Transverse colon (tissue), 4 donors: ENCODE measurements at regions of chr14 and their contacts with region 1.

Region 1: DNA sequence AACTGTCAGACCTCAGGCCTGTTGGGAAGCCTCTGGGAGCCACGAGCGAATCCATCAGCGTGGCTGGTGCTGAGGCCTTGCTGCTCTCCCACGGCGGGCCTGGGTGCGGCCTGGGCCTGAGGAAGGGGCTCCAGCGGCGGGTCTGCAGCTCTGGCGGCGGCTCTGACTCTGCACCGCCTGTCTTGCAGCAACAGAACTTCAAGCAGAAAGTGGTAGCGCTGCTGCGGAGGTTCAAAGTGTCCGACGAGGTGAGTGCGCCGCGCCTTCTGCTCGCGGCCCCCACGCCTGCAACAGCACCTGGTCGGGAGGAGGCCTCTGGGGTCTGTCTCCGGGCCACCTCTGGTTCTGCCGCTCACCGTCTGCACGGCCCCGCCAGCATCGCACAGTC is 28.7 kb upstream of the TEX22 start:
- DNase-seq: no peak
- H3K4me3 ChIP-seq: no peak overlapping the region
- H3K27ac ChIP-seq: no peak overlapping the region
- H3K4me1 ChIP-seq: peaks cover 0 to 5% (median 2%) of the 10 kb centered on the region in 4 donors
- H3K27me3 ChIP-seq: no peaks in the 10 kb centered on the region
- CTCF ChIP-seq: no peak
- EP300 ChIP-seq: no peak
- POLR2A ChIP-seq: no peak

Region 2: DNA sequence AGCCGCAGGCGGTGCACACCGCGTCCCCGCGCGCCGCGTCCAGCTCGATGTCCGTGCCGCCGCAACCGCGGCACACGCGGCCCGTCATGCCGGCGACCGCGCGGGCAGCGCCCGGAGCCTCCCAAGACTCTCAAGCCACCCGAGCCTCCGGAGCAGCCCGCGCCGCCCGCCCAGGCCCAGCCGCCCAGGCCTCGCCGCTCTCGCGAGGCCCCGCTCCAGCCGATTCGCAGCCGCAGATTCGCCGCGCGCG is 69.2 kb before region 1 on chr14:
- in situ Hi-C with region 1: no loop called
- intact Hi-C with region 1: no loop called
- DNase-seq: no peak
- H3K4me3 ChIP-seq: peak overlapping the region; percentile 59 to 88 (median 79)
- H3K27ac ChIP-seq: peak overlapping the region; percentile 94 to 97 (median 96)
- H3K4me1 ChIP-seq: peaks cover 8 to 35% (median 19%) of the 10 kb centered on the region in 4 donors
- H3K27me3 ChIP-seq: no peaks in the 10 kb centered on the region
- CTCF ChIP-seq: no peak
- EP300 ChIP-seq: no peak
- POLR2A ChIP-seq: no peak

Region 3: DNA sequence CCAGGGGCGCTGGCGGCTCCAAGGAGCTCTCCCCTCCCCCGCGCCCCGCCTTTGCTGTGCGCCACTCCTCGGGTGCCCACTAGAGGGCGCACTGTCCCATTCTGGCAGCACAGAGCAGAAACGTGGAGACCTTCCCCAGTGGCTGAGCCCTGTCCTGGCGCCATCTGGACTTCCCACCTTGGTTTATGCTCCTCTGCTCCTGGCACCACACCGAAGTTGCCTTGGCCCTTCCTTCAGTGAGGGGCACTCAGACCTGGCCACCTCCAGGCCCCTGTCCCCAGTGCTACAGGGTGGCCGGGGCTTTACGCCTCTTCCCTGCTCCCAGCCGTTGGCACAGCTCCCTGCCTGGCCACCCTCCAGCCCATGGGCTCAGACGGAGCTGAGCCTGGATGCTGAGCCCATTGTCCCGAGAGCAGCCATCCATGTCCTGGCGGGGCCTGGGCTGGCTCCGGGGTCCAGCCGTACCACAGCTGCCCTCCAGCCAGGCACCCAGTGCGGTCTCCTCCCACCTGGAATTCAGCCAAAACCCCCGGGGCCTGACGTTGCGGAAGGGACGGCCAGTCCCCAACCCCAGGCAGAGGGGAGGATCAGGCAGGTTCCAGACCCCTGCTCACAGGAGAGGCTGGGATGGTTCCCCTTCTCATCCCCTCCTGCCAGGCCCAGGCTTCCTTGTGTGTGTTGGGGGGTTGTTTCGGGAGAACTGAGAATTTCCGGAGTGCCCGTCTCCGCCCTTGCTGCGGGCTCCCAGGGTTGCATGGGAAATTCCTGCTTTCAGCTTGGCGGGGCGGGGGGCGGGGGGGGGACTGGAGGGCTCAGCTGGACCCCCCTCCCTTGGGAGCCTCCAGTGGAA is 111.5 kb after region 1 on chr14:
- in situ Hi-C with region 1: no loop called
- intact Hi-C with region 1: loop called (anchors 2 kb)
- DNase-seq: peak; percentile 92
- H3K4me3 ChIP-seq: peak overlapping the region; percentile 10 to 44 (median 23)
- H3K27ac ChIP-seq: peak overlapping the region; percentile 91 to 99 (median 98)
- H3K4me1 ChIP-seq: peaks cover 37 to 78% (median 59%) of the 10 kb centered on the region in 4 donors
- H3K27me3 ChIP-seq: peaks cover 44% of the 10 kb centered on the region
- CTCF ChIP-seq: peak; percentile 99 to 100 (median 99)
- EP300 ChIP-seq: no peak
- POLR2A ChIP-seq: peak; percentile 42

Region 4: GRCh38 chr14:105490572-105491366 is 121.1 kb after region 1 on chr14 and contains the start of gene TEDC1:
- in situ Hi-C with region 1: no loop called
- intact Hi-C with region 1: loop called (anchors 2 kb)
- DNase-seq: peak; percentile 99
- H3K4me3 ChIP-seq: peak within 1 kb of the TSS; percentile 65 to 81 (median 76)
- H3K27ac ChIP-seq: peak within 1 kb of the TSS; percentile 98 to 99 (median 99)
- H3K4me1 ChIP-seq: peaks cover 14 to 55% (median 48%) of the 10 kb centered on the region in 4 donors
- H3K27me3 ChIP-seq: peaks cover 16% of the 10 kb centered on the region
- CTCF ChIP-seq: peak; percentile 55 to 84 (median 75)
- EP300 ChIP-seq: no peak
- POLR2A ChIP-seq: peak; percentile 75
- total RNA-seq, gene TEDC1: 10.8 to 52.9 (median 29.5) TPM